Activated CD8-positive, alpha-beta T cell treated with anti-CD3 and anti-CD28 coated beads for 36 hours (primary cell): ENCODE measurements at regions of chr3 and their contacts with region 1.

Region 1: DNA sequence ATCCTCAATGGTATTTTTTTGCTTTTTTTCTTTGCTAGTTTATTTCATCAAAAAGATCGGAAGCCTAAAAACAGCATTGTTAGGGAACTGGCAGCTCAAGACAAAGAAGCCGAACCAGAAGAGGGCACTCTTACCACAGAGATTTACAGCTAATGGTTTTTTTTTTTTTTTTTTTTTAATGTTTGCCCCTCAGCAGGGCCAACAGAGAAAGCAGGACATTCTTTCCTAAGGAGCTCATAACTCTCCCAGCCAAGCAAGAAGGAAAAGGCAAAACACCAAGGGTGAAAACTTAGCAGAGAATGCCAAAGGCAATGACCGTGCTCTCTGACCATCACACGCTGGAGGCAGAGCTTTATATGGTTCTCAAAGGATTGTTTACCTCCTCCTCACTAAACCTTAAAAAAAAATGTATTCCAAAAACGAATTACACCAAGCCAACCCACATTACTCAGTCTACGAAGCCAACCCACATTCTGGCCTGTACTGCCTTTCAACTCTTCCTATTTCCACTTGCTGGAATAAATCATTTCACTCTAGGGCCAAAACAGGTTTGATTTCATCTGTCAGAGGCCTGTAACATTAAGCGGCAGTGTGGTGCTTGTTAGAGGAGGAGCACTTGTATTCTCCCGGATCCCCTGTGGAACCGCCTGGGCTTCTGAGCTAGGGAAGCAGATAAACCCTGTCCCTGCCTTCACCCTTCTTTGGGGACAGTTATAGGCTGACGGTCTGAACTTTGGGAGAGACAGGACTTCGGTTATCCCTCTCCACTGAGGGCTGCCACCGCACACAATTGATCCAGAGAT is 35.6 kb upstream of the GYG1 start:
- DNase-seq: peak; percentile 50
- ATAC-seq: no peak
- H3K4me3 Mint-ChIP-seq: no peak overlapping the region
- H3K27ac Mint-ChIP-seq: no peak overlapping the region
- H3K4me1 Mint-ChIP-seq: no peaks in the 10 kb centered on the region
- H3K27me3 Mint-ChIP-seq: peaks cover 3% of the 10 kb centered on the region
- CTCF ChIP-seq: peak; percentile 56

Region 2: DNA sequence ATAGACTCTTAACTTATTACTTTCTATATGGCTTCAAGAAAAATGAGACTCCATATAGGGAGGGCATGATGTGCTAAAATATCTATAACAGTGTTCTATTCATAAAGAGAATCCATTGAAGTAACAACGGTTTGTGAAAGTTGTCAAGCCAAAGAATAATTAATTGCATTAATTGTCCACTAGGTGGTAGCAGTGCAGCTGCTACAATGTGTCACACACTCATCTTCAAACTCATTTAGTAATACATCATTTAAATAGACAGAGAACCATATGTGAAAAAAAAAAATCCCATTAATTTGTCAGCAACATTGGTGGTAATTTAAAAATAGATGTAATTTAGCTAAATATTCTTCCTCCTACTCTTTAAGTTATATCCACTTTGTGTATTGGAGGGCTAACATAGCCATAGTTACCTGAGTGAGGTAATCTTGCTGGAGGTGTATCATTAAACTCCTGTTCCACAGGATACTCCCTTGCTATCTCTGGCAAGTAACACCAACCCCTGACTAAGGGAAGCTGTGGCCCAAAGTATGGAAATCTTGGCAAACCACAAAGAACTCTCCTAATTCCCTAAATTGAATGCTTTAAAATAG is 94.4 kb before region 1 on chr3:
- CTCF ChIA-PET with region 1: interaction called, 10 read pairs
- POLR2A ChIA-PET with region 1: no interaction called
- intact Hi-C with region 1: no loop called
- DNase-seq: no peak
- ATAC-seq: peak; percentile 55
- H3K4me3 Mint-ChIP-seq: no peak overlapping the region
- H3K27ac Mint-ChIP-seq: no peak overlapping the region
- H3K4me1 Mint-ChIP-seq: no peaks in the 10 kb centered on the region
- H3K27me3 Mint-ChIP-seq: peaks cover 12% of the 10 kb centered on the region
- CTCF ChIP-seq: peak; percentile 83

Region 3: GRCh38 chr3:149114458-149114857 is 158.7 kb after region 1 on chr3:
- CTCF ChIA-PET with region 1: interaction called, 31 read pairs
- POLR2A ChIA-PET with region 1: no interaction called
- intact Hi-C with region 1: loop called (anchors 10 kb)
- DNase-seq: no peak
- ATAC-seq: no peak
- H3K4me3 Mint-ChIP-seq: no peak overlapping the region
- H3K27ac Mint-ChIP-seq: no peak overlapping the region
- H3K4me1 Mint-ChIP-seq: no peaks in the 10 kb centered on the region
- H3K27me3 Mint-ChIP-seq: no peaks in the 10 kb centered on the region
- CTCF ChIP-seq: no peak

Region 4: DNA sequence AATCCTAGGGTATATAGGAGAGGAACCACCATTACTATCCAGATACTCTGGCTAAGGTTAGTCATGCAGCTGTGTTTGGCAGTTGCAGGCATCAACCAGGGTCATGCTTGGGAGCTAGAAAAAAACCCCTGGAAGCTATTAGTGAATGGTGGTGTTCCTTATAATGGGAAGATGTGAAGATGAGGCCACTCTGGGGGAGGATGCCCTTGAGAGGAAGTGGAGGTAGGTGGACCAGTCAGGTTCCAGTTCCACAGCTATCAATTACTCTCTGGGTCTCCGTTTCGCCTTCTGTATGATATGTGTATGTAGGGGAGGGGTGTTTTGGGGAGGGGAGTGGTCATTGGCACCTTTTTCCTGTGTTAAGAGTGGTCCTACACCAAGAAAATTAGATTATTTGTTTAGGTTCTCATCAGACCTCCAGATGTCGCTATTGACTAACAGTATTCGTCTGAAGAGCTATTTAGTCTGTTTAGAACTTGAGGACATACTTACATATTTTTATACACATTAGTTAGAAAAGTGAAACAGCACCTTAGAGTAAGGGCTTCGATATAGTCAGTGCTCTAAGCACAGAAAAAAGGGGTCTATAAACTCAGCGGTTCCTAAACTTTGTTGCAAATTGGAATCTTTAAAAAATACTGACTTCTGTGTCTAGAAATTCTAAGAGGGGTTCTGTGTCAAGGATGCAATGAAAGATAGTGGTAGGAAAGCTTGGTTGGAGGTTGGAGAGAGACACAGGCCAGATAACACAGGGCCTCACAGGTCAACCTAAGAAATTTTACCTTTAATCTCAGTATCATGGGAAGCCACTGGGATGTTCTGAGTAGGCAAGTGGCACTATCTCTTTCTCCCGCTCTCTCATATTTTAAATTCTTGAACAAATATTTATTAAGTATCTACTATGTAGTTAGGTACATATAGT is 164.6 kb after region 1 on chr3:
- CTCF ChIA-PET with region 1: interaction called, 31 read pairs
- POLR2A ChIA-PET with region 1: no interaction called
- intact Hi-C with region 1: loop called (anchors 10 kb)
- DNase-seq: no peak
- ATAC-seq: peak; percentile 89
- H3K4me3 Mint-ChIP-seq: no peak overlapping the region
- H3K27ac Mint-ChIP-seq: no peak overlapping the region
- H3K4me1 Mint-ChIP-seq: no peaks in the 10 kb centered on the region
- H3K27me3 Mint-ChIP-seq: peaks cover 2% of the 10 kb centered on the region
- CTCF ChIP-seq: peak; percentile 75

Region 5: DNA sequence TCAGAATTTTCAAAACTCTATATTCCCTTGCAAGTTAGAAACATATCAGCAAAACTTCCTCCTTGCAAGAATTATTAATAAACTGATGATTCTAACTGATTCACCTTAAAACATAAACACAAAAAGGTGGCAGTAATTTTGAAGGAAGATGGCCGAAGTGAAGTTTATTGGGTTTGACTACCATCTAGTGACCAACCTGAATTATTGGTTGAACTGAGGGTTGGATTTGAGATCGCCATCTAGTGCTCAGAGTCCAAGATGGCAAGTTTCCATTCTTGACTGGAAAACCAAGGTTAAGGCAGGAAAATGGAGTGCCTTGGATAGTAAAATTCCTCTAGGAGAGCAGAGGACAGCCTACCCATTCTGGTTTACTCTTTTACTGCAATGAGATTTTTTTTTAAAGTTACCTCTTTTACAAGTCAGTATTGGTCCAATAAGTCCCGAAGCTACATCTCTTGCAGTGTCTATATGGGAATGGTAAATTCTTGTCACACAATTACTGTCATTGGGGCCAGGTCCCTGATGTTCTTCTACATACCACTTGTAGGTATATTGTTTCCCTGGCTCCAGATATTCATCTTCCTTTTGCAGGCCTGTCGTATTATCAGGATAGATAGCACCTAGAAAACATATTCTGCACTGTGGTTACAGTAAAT is 317.5 kb after region 1 on chr3:
- CTCF ChIA-PET with region 1: interaction called, 30 read pairs
- POLR2A ChIA-PET with region 1: no interaction called
- intact Hi-C with region 1: loop called (anchors 1 kb)
- DNase-seq: peak; percentile 27
- ATAC-seq: peak; percentile 95
- H3K4me3 Mint-ChIP-seq: no peak overlapping the region
- H3K27ac Mint-ChIP-seq: no peak overlapping the region
- H3K4me1 Mint-ChIP-seq: peaks cover 10% of the 10 kb centered on the region
- H3K27me3 Mint-ChIP-seq: no peaks in the 10 kb centered on the region
- CTCF ChIP-seq: peak; percentile 97